ENCODE measurements at regions of chr17 and their contacts with region 1.

Region 1: GRCh38 chr17:1186923-1187771 is 7.4 kb upstream of the ABR start:
- DNase-seq: peak; percentile 70 to 98 (median 83)

Region 2: GRCh38 chr17:1019451-1019850 is 167.7 kb before region 1 on chr17:
- intact Hi-C with region 1: no loop called
- DNase-seq: peak in 1 of 10 donors; percentile 85

Region 3: DNA sequence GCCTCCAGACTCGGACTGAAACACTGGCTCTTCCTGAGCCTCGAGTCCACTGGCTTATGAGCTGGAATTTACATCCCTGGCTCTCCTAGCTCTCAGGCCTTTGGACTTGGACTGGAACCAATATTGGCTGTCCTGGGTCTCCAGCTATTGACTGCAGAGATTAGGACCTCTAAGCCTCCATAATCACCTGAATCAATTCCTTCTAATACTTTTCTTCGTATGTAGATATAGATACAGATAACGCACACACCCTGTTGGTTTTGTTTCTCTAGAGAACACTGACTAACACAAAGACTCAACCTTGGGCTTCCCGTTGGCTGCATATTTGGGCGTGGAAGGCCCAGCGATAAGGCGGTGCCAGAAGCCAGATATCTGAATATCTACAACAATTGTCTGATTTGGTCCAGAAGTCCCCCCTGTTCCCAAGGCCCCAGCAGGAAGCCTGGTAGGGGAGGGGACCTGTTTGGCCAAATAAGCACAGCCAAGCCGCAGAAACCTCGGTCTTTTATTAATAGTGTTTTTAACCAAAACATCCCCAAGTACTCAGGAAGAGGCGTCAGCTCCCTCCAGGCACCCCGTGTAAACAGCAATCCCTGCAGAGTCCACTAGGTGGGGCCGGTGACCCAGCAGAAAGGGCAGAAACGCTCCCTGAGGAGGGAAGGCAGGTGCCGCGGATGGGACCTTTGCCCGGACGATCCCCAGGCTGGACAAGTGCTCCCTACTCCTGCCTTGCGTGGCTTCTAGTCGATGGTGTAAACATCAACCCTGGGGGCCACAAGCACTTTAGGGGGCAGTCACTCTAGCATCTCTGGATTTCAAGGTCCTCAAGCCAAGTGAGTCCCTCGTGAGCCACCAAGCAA is 64.4 kb before region 1 on chr17:
- intact Hi-C with region 1: loop called (anchors 1 kb)
- DNase-seq: peak; percentile 71 to 96 (median 80)